ENCODE measurements at regions of chr16 and their contacts with region 1.

Region 1: GRCh38 chr16:56749672-56750491 is 20.0 kb downstream of the NUP93 start:
- DNase-seq: no peak
- H3K4me3 ChIP-seq: no peak overlapping the region
- H3K27ac ChIP-seq: peak overlapping the region; percentile 67 to 74
- H3K4me1 ChIP-seq: peaks cover 6 to 40% of the 10 kb centered on the region in 2 donors
- H3K27me3 ChIP-seq: no peaks in the 10 kb centered on the region
- CTCF ChIP-seq: no peak

Region 2: GRCh38 chr16:56729735-56730662 is 19.9 kb before region 1 on chr16 and contains the start of gene NUP93:
- intact Hi-C with region 1: loop called (anchors 2 kb)
- DNase-seq: peak; percentile 63 to 94
- H3K4me3 ChIP-seq: peak within 1 kb of the TSS; percentile 81 to 99
- H3K27ac ChIP-seq: peak within 1 kb of the TSS; percentile 80 to 86
- H3K4me1 ChIP-seq: peaks cover 0 to 24% of the 10 kb centered on the region in 2 donors
- H3K27me3 ChIP-seq: no peaks in the 10 kb centered on the region
- CTCF ChIP-seq: no peak
- total RNA-seq, gene NUP93: 419 TPM

Region 3: DNA sequence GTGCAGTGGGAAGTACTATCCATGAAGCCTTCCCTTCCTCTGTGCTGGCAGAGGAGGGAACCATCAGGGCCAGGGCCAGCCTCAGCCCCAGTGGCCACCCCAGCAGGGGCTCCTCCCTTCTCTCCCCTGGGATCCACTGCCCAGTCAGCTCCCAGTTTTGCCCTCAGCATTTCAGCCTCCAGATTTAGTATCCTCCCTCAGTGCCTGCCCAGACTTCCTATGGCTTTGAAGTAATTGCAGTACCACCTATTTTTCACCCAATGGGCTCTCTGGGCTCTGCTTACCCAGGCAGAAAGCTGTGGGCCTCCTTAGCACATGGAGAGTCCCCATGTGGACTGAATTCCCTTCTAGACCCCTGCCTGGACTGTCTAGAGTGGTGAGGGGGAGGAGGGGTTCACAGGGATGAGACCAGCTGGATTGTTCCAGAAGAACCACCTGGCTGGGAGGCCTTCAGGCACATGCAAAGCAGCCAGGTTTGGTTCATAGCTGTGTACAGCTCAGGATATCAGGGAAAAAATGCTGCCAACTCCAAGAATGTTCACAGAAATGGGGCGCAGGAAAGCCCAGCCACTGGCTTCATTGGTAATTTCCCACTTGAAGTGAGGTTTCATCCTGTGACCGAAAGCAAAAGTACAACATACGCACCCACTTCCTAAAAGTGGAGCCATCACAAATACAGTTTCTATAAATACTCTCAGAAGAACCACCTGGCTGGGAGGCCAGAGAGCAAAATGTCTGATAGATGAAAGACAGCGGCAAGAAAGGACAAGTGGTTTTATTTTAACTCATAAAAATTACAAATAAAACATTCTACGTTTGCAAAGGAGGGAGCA is 166.9 kb after region 1 on chr16:
- intact Hi-C with region 1: no loop called
- DNase-seq: no peak
- H3K4me3 ChIP-seq: no peak overlapping the region
- H3K27ac ChIP-seq: peak overlapping the region; percentile 24 to 50
- H3K4me1 ChIP-seq: peaks cover 0 to 13% of the 10 kb centered on the region in 2 donors
- H3K27me3 ChIP-seq: no peaks in the 10 kb centered on the region
- CTCF ChIP-seq: no peak